ENCODE measurements at regions of chr19 and their contacts with region 1.

Region 1: DNA sequence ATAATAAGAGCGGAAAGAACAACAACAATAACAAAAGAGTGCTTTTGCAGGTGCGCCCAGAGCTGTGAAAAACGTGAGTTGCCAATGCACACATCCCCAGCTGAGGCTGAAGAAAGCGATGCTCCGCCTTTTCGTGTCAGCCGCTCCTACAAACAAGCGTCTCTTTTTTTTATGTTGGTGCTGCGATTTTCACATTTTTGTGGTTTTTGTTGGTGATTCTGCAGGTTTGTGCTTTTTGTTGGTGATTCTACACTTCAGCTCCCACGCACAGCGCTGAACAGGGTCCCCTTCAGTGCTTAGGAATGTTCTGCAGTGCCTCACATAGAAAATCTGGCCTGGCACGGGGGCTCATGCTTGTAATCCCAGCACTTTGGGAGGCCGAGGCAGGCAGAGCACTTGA is 7.3 kb upstream of the SBK3 start:
- DNase-seq: peak; percentile 89
- ATAC-seq: peak; percentile 65
- H3K4me3 ChIP-seq: no peak overlapping the region
- H3K27ac ChIP-seq: no peak overlapping the region
- H3K4me1 ChIP-seq: peaks cover 18% of the 10 kb centered on the region
- H3K27me3 ChIP-seq: no peaks in the 10 kb centered on the region; the same call in 1 of the 2 replicates
- CTCF ChIP-seq: no peak
- POLR2A ChIP-seq: no peak
- RAD21 ChIP-seq: no peak

Region 2: GRCh38 chr19:55580628-55581144 is 28.1 kb after region 1 on chr19 and contains the start of gene ZNF579:
- CTCF ChIA-PET with region 1: no interaction called
- POLR2A ChIA-PET with region 1: no interaction called
- dilution Hi-C with region 1: no loop called
- in situ Hi-C with region 1: no loop called
- intact Hi-C with region 1: loop called (anchors 2 kb)
- DNase-seq: peak; percentile 91
- ATAC-seq: peak; percentile 86
- H3K4me3 ChIP-seq: peak within 1 kb of the TSS; percentile 87
- H3K27ac ChIP-seq: peak within 1 kb of the TSS; percentile 99
- H3K4me1 ChIP-seq: peaks cover 6% of the 10 kb centered on the region; the same call in 1 of the 2 replicates
- H3K27me3 ChIP-seq: no peaks in the 10 kb centered on the region
- CTCF ChIP-seq: no peak
- POLR2A ChIP-seq: no peak
- RAD21 ChIP-seq: peak; percentile 25; the same call in 1 of the 2 replicates
- total RNA-seq, gene ZNF579: 0.54 and 0.83 TPM in 2 replicates

Region 3: GRCh38 chr19:55632463-55632834 is 79.8 kb after region 1 on chr19:
- CTCF ChIA-PET with region 1: no interaction called
- POLR2A ChIA-PET with region 1: no interaction called
- dilution Hi-C with region 1: no loop called
- in situ Hi-C with region 1: no loop called
- intact Hi-C with region 1: no loop called
- DNase-seq: peak; percentile 96
- ATAC-seq: peak; percentile 73
- H3K4me3 ChIP-seq: no peak overlapping the region
- H3K27ac ChIP-seq: no peak overlapping the region
- H3K4me1 ChIP-seq: peaks cover 9% of the 10 kb centered on the region
- H3K27me3 ChIP-seq: no peaks in the 10 kb centered on the region
- CTCF ChIP-seq: peak; percentile 85
- POLR2A ChIP-seq: 0 out of 2 replicates have a peak, but pooled peaks have one; percentile 42
- RAD21 ChIP-seq: peak; percentile 79

Region 4: GRCh38 chr19:55667958-55668357 is 115.3 kb after region 1 on chr19:
- CTCF ChIA-PET with region 1: no interaction called
- POLR2A ChIA-PET with region 1: no interaction called
- dilution Hi-C with region 1: no loop called
- in situ Hi-C with region 1: no loop called
- intact Hi-C with region 1: no loop called
- DNase-seq: no peak
- ATAC-seq: no peak
- H3K4me3 ChIP-seq: no peak overlapping the region
- H3K27ac ChIP-seq: no peak overlapping the region
- H3K4me1 ChIP-seq: no peaks in the 10 kb centered on the region
- H3K27me3 ChIP-seq: no peaks in the 10 kb centered on the region
- CTCF ChIP-seq: no peak
- POLR2A ChIP-seq: no peak
- RAD21 ChIP-seq: no peak